GM12878 (cell line): ENCODE measurements at regions of chr12 and their contacts with region 1.

Region 1: GRCh38 chr12:11906286-11906935 is 164.3 kb upstream of the BCL2L14 start:
- DNase-seq: no peak
- ATAC-seq: no peak
- H3K4me3 ChIP-seq: no peak overlapping the region
- H3K27ac ChIP-seq: peak overlapping the region; percentile 35; the same call in 1 of the 2 replicates
- H3K4me1 ChIP-seq: peaks cover 20% of the 10 kb centered on the region
- H3K27me3 ChIP-seq: no peaks in the 10 kb centered on the region
- CTCF ChIP-seq: no peak
- EP300 ChIP-seq: no peak
- POLR2A ChIP-seq: no peak
- RAD21 ChIP-seq: no peak

Region 2: DNA sequence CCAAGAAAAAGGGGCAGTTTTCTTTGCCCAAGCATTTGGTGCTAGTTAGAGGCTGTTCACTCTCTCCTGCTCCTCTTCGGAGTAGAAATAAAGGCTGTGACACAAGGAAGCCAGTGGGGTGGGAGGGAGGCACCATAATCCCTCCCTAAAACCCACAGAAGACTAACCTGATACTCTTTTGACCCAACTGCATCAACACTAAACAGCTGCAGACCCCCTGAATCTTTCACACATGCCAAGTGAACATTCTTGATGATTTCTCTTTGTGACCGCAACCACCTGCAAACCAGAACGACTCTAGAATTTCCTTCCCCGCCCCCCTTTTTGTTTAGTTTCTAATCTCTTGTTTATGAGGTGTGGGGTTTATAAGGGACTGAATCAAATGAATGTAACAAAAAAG is 11.5 kb before region 1 on chr12:
- CTCF ChIA-PET with region 1: interaction called, 4 read pairs
- POLR2A ChIA-PET with region 1: interaction called, 15 read pairs
- RAD21 ChIA-PET with region 1: no interaction called
- SMC1A ChIA-PET with region 1: no interaction called
- in situ Hi-C with region 1: no loop called
- intact Hi-C with region 1: no loop called
- DNase-seq: peak; percentile 31
- ATAC-seq: no peak
- H3K4me3 ChIP-seq: no peak overlapping the region
- H3K27ac ChIP-seq: peak overlapping the region; percentile 74
- H3K4me1 ChIP-seq: peaks cover 28% of the 10 kb centered on the region
- H3K27me3 ChIP-seq: no peaks in the 10 kb centered on the region
- CTCF ChIP-seq: no peak
- EP300 ChIP-seq: no peak
- POLR2A ChIP-seq: no peak
- RAD21 ChIP-seq: 0 out of 2 replicates have a peak, but pooled peaks have one; percentile 7

Region 3: GRCh38 chr12:12486661-12487240 is 580.3 kb after region 1 on chr12:
- CTCF ChIA-PET with region 1: no interaction called
- POLR2A ChIA-PET with region 1: no interaction called
- RAD21 ChIA-PET with region 1: no interaction called
- SMC1A ChIA-PET with region 1: no interaction called
- in situ Hi-C with region 1: no loop called
- intact Hi-C with region 1: no loop called
- DNase-seq: peak; percentile 57
- ATAC-seq: peak; percentile 93
- H3K4me3 ChIP-seq: no peak overlapping the region
- H3K27ac ChIP-seq: peak overlapping the region; percentile 58
- H3K4me1 ChIP-seq: peaks cover 19% of the 10 kb centered on the region
- H3K27me3 ChIP-seq: no peaks in the 10 kb centered on the region
- CTCF ChIP-seq: no peak
- EP300 ChIP-seq: peak; percentile 96 to 98
- POLR2A ChIP-seq: no peak
- RAD21 ChIP-seq: no peak